PC-9 (cell line): ENCODE measurements at regions of chr13 and their contacts with region 1.

Region 1: DNA sequence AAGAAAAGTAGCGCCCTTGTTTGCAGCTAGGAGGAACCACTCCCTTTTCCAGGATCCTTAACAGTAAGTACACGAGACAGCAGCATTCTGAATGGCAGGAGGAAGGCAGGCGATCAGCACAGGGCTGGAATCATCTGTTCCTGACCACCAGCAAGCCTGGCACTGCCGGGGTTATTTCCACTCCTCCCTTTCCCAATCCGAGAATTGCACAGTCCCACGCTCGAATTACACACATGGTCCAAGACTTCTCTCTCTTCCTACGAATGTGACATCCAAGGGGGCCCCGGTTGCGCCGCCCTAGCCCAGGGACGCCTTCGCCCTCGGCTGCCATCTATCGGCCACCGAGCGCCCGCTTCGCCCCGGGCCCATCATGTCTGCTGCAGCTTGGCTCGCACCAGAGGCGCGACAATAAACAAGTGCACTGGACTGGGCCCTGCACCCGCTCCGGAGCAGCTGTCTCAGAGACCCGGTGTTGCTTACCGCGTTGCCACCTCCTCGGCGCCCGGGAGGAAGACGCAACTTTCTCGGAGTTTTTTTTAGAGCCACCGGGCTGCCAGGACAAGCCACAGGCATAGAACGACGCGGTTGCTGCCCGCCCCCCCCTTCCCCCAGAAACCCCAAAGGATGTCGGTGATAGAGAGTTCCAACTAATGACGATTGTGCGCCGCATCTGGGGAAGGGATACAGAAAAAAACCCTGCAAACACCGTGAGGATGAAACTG is at the start of gene SLITRK5:
- DNase-seq: peak; percentile 55 to 81
- H3K4me3 ChIP-seq: peak within 1 kb of the TSS; percentile 72
- H3K27ac ChIP-seq: no peak within 1 kb of the TSS
- H3K4me1 ChIP-seq: 0 out of 2 replicates have a peak, but pooled peaks cover 4% of the 10 kb centered on the region
- H3K27me3 ChIP-seq: no peaks in the 10 kb centered on the region
- CTCF ChIP-seq: peak; percentile 79
- total RNA-seq, gene SLITRK5: 0.20 and 0.25 TPM in 2 replicates

Region 2: GRCh38 chr13:85864963-85865530 is 1806.1 kb before region 1 on chr13:
- CTCF ChIA-PET with region 1: no interaction called
- POLR2A ChIA-PET with region 1: no interaction called
- intact Hi-C with region 1: no loop called
- DNase-seq: no peak
- H3K4me3 ChIP-seq: no peak overlapping the region
- H3K27ac ChIP-seq: no peak overlapping the region
- H3K4me1 ChIP-seq: no peaks in the 10 kb centered on the region
- H3K27me3 ChIP-seq: no peaks in the 10 kb centered on the region
- CTCF ChIP-seq: peak; percentile 58

Region 3: DNA sequence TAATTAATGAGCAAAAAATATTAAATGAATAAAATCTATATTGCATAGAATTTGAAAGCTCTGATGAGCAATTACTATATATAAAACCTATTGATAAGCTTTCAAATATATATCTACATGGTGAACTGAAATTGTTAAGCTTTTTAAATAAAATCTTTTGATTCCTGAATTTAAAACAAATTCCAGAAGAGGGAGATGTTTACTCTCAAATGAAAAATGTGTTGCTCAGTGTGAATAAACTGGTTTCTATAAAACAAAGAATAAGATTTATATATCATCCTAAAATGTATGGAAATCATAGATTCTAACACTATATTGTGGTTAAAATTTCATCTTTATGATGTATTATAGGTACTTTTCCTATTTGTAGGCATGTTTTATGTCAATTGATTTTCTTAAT is 1700.5 kb before region 1 on chr13:
- CTCF ChIA-PET with region 1: no interaction called
- POLR2A ChIA-PET with region 1: no interaction called
- intact Hi-C with region 1: loop called (anchors 10 kb)
- DNase-seq: no peak
- H3K4me3 ChIP-seq: no peak overlapping the region
- H3K27ac ChIP-seq: no peak overlapping the region
- H3K4me1 ChIP-seq: no peaks in the 10 kb centered on the region
- H3K27me3 ChIP-seq: no peaks in the 10 kb centered on the region
- CTCF ChIP-seq: peak; percentile 35; the same call in 1 of the 2 replicates

Region 4: GRCh38 chr13:86870444-86870843 is 800.7 kb before region 1 on chr13:
- CTCF ChIA-PET with region 1: no interaction called
- POLR2A ChIA-PET with region 1: no interaction called
- intact Hi-C with region 1: loop called (anchors 2 kb)
- DNase-seq: no peak
- H3K4me3 ChIP-seq: no peak overlapping the region
- H3K27ac ChIP-seq: no peak overlapping the region
- H3K4me1 ChIP-seq: no peaks in the 10 kb centered on the region
- H3K27me3 ChIP-seq: no peaks in the 10 kb centered on the region
- CTCF ChIP-seq: peak; percentile 83

Region 5: GRCh38 chr13:87259551-87259954 is 411.6 kb before region 1 on chr13:
- CTCF ChIA-PET with region 1: no interaction called
- POLR2A ChIA-PET with region 1: no interaction called
- intact Hi-C with region 1: loop called (anchors 10 kb)
- DNase-seq: peak in 1 of 2 experiments; percentile 8
- H3K4me3 ChIP-seq: no peak overlapping the region
- H3K27ac ChIP-seq: no peak overlapping the region
- H3K4me1 ChIP-seq: no peaks in the 10 kb centered on the region
- H3K27me3 ChIP-seq: no peaks in the 10 kb centered on the region
- CTCF ChIP-seq: peak; percentile 55

Region 6: DNA sequence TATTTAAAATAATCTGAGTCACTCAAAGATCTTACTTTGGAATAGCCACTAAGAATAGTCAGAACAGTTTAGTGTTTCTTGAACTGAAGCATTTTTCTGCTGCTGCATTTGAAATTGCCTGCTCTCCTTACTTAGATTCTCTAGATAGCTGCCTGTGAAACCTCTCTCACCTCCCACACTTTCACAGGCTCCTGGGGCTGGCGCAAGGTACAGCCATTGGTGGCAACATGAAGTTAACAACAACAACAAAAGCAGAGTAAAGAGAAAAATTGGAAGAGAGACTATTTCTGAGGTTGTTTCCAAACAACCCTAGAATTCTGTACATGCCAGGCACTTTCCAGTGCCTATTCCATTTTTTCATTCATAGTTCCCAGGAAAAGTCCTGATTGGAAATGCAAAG is 25.3 kb after region 1 on chr13:
- CTCF ChIA-PET with region 1: no interaction called
- POLR2A ChIA-PET with region 1: no interaction called
- intact Hi-C with region 1: no loop called
- DNase-seq: no peak
- H3K4me3 ChIP-seq: no peak overlapping the region
- H3K27ac ChIP-seq: no peak overlapping the region
- H3K4me1 ChIP-seq: no peaks in the 10 kb centered on the region
- H3K27me3 ChIP-seq: no peaks in the 10 kb centered on the region
- CTCF ChIP-seq: no peak